OCI-LY7 (cell line): ENCODE measurements at regions of chr12 and their contacts with region 1.

Region 1: DNA sequence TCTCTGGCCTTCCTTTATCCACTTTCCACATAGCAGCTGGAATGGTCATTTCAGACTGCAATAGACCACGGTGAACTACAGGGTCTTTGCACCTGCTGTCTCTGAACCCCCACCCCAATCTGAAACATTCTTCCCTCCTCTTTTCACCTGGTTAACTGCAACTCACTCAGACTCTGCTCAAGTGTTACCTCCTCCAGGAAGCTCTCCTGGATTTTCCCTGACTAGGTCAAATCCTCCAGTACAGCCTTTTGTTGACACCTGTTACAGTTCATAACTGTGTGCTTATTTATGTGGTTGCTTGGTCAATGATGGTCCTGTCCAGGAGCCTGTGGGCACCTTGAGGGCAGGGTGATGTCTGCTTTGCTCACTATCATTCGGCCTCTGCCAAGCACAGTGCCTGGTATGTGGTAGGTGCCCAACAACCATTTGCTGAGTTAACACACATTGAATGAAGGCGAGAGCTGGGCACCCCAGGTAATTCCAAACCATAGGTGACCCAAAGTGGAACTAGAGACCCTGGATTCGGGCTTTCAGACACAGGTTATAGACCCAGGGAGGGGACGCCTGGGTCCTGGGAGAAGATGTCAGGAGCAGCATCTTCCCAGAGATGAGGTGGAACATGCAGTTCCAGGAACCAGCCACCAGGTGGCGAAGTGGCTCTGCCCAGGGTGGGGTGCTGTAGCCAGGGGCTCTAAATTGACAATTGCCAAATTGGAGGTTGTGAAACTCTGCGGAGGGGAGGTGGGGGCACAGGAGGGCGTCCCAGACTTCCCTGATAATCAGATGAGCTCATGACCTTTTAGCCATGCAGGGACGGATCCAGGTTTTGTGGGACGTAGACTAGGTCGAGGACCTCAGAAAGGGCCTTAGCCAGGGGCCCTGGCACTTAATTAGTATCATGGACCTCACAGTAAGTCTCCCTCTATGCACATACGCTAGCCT is 28.1 kb downstream of the TRPV4 start:
- DNase-seq: peak; percentile 62
- H3K4me3 ChIP-seq: no peak overlapping the region
- H3K27ac ChIP-seq: no peak overlapping the region
- H3K4me1 ChIP-seq: no peaks in the 10 kb centered on the region
- CTCF ChIP-seq: peak; percentile 98

Region 2: GRCh38 chr12:109670731-109671130 is 134.4 kb before region 1 on chr12:
- CTCF ChIA-PET with region 1: no interaction called
- POLR2A ChIA-PET with region 1: no interaction called
- intact Hi-C with region 1: no loop called
- DNase-seq: no peak
- H3K4me3 ChIP-seq: no peak overlapping the region
- H3K27ac ChIP-seq: no peak overlapping the region
- H3K4me1 ChIP-seq: no peaks in the 10 kb centered on the region
- CTCF ChIP-seq: no peak

Region 3: GRCh38 chr12:109844983-109845823 is 40.1 kb after region 1 on chr12:
- CTCF ChIA-PET with region 1: interaction called, 5 read pairs
- POLR2A ChIA-PET with region 1: no interaction called
- intact Hi-C with region 1: loop called (anchors 1 kb)
- DNase-seq: peak; percentile 88
- H3K4me3 ChIP-seq: no peak overlapping the region
- H3K27ac ChIP-seq: no peak overlapping the region
- H3K4me1 ChIP-seq: peaks cover 9% of the 10 kb centered on the region
- CTCF ChIP-seq: peak; percentile 99

Region 4: GRCh38 chr12:109880016-109880931 is 75.2 kb after region 1 on chr12 and contains the start of gene GLTP:
- CTCF ChIA-PET with region 1: interaction called, 3 read pairs
- POLR2A ChIA-PET with region 1: no interaction called
- intact Hi-C with region 1: loop called (anchors 1 kb)
- DNase-seq: peak; percentile 94
- H3K4me3 ChIP-seq: peak within 1 kb of the TSS; percentile 76
- H3K27ac ChIP-seq: no peak within 1 kb of the TSS
- H3K4me1 ChIP-seq: peaks cover 38% of the 10 kb centered on the region
- CTCF ChIP-seq: peak; percentile 57
- total RNA-seq, gene GLTP: 18.6 and 24.0 TPM in 2 replicates

Region 5: GRCh38 chr12:110065540-110065939 is 260.4 kb after region 1 on chr12:
- CTCF ChIA-PET with region 1: no interaction called
- POLR2A ChIA-PET with region 1: no interaction called
- intact Hi-C with region 1: no loop called
- DNase-seq: no peak
- H3K4me3 ChIP-seq: no peak overlapping the region
- H3K27ac ChIP-seq: no peak overlapping the region
- H3K4me1 ChIP-seq: no peaks in the 10 kb centered on the region
- CTCF ChIP-seq: no peak